B cell (primary cell): ENCODE measurements at regions of chr12 and their contacts with region 1.

Region 1: DNA sequence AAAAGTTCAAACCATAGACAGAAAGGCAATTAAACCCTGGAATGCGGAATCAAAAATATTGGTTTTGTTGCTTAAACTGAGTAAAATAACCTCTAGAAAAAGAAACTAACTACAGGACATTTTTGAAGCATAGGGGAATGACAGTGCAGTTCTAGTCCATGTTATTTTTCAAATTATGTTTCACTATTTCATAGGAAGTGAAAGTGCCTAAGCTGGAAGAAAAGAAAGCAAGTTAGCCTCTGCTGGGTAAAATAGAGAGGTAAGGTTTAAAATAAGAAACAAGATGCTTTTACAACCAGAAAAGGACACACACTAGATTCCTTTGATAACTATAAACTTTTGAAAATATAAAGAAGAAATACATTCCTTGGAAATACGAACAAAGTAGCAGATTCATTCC is 1.1 kb downstream of the CLECL1 start:
- DNase-seq: peak; percentile 69
- ATAC-seq: peak; percentile 64
- H3K4me3 ChIP-seq: peak overlapping the region; percentile 35 to 74 (median 44)
- H3K4me3 Mint-ChIP-seq: peak overlapping the region; percentile 92
- H3K27ac ChIP-seq: peak overlapping the region; percentile 83 to 94
- H3K27ac Mint-ChIP-seq: peak overlapping the region; percentile 95
- H3K4me1 ChIP-seq: peaks cover 42 to 58% of the 10 kb centered on the region in 2 donors
- H3K4me1 Mint-ChIP-seq: peaks cover 68% of the 10 kb centered on the region
- H3K27me3 ChIP-seq: no peaks in the 10 kb centered on the region
- H3K27me3 Mint-ChIP-seq: no peaks in the 10 kb centered on the region
- CTCF ChIP-seq: no peak

Region 2: DNA sequence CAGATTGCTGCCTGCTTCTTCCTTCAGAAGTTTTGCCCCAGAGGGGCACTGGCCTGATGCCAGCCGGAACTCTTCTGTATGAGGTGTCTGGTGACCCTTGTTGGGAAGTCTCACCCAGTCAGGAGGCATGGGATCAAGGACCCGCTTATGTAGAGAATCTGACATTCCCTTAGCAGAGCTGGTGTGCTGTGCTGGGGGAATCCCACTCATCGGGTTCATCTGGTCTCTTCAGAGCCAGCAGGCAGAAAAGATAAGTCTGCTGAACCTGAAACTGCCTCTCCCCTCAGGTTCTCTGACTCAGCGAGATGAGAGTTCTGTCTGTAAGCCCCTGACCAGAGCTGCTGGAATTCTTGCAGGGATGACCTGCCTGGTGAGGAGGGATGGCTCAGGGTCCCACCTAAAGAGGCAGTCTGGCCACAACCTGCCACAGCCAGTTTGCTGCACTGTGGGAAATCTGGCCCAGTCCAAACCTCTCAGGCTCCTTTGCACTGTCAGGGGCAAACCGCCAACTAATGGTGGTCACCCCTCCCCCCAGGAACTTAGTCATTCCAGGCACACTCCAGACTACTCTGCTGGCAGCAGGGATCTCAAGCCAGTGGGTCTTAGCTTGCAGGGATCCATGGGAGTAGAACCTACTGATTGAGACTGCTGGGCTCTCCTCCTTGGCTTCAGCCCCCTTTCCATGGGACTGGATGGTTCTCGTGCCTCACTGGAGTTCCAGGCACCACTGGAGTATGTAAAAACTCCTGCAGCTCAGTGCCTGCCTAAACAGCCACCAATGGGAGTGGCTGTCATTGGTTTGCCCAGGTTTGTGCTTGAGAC is 58.2 kb before region 1 on chr12:
- CTCF ChIA-PET with region 1: interaction called, 9 read pairs
- POLR2A ChIA-PET with region 1: no interaction called
- intact Hi-C with region 1: loop called (anchors 2 kb)
- DNase-seq: peak; percentile 56
- ATAC-seq: peak; percentile 32
- H3K4me3 ChIP-seq: peak overlapping the region in 3 of 5 experiments; percentile 63 to 77 (median 69)
- H3K4me3 Mint-ChIP-seq: peak overlapping the region; percentile 91
- H3K27ac ChIP-seq: peak overlapping the region; percentile 28 to 87
- H3K27ac Mint-ChIP-seq: peak overlapping the region; percentile 86
- H3K4me1 ChIP-seq: peaks cover 60 to 70% of the 10 kb centered on the region in 2 donors
- H3K4me1 Mint-ChIP-seq: peaks cover 77% of the 10 kb centered on the region
- H3K27me3 ChIP-seq: no peaks in the 10 kb centered on the region
- H3K27me3 Mint-ChIP-seq: no peaks in the 10 kb centered on the region
- CTCF ChIP-seq: no peak

Region 3: GRCh38 chr12:9721394-9722092 is 10.3 kb before region 1 on chr12:
- CTCF ChIA-PET with region 1: interaction called, 25 read pairs
- POLR2A ChIA-PET with region 1: interaction called, 20 read pairs
- intact Hi-C with region 1: loop called (anchors 1 kb)
- DNase-seq: peak; percentile 85
- ATAC-seq: peak; percentile 89
- H3K4me3 ChIP-seq: peak overlapping the region in 1 of 5 experiments; percentile 43
- H3K4me3 Mint-ChIP-seq: peak overlapping the region; percentile 60
- H3K27ac ChIP-seq: peak overlapping the region; percentile 88 to 91
- H3K27ac Mint-ChIP-seq: peak overlapping the region; percentile 85
- H3K4me1 ChIP-seq: peaks cover 71 to 94% of the 10 kb centered on the region in 2 donors
- H3K4me1 Mint-ChIP-seq: peaks cover 86% of the 10 kb centered on the region
- H3K27me3 ChIP-seq: no peaks in the 10 kb centered on the region
- H3K27me3 Mint-ChIP-seq: no peaks in the 10 kb centered on the region
- CTCF ChIP-seq: no peak